PC-3 (cell line): ENCODE measurements at regions of chr13 and their contacts with region 1.

Region 1: GRCh38 chr13:60654415-60654814 is 257.4 kb downstream of the TDRD3 start:
- DNase-seq: peak; percentile 60
- ATAC-seq: peak; percentile 92
- H3K4me3 ChIP-seq: no peak overlapping the region
- H3K27ac ChIP-seq: no peak overlapping the region
- H3K4me1 ChIP-seq: no peaks in the 10 kb centered on the region; the same call in 1 of the 2 replicates
- H3K27me3 ChIP-seq: no peaks in the 10 kb centered on the region
- CTCF ChIP-seq: peak; percentile 79

Region 2: DNA sequence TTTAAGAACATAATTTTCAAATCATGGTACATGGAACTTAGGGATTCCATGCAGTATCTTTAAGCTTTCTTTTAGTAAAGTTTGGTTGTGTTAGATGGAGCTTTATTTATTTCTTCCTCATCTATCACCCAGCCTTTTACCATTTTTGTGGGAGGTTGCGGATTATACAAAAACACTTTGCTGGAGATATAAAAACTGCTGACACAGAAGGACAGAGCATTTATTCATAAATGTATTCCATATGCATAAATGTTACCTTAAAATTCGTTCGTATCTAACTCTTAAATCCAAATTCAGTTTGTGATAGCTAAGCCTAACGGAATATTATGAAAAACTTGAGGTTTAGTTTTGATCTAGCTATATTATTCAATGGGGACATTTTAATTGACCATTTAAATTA is 114.1 kb before region 1 on chr13:
- CTCF ChIA-PET with region 1: no interaction called
- POLR2A ChIA-PET with region 1: no interaction called
- intact Hi-C with region 1: no loop called
- DNase-seq: no peak
- ATAC-seq: no peak
- H3K4me3 ChIP-seq: no peak overlapping the region
- H3K27ac ChIP-seq: no peak overlapping the region
- H3K4me1 ChIP-seq: 0 out of 2 replicates have a peak, but pooled peaks cover 7% of the 10 kb centered on the region
- H3K27me3 ChIP-seq: no peaks in the 10 kb centered on the region
- CTCF ChIP-seq: no peak

Region 3: DNA sequence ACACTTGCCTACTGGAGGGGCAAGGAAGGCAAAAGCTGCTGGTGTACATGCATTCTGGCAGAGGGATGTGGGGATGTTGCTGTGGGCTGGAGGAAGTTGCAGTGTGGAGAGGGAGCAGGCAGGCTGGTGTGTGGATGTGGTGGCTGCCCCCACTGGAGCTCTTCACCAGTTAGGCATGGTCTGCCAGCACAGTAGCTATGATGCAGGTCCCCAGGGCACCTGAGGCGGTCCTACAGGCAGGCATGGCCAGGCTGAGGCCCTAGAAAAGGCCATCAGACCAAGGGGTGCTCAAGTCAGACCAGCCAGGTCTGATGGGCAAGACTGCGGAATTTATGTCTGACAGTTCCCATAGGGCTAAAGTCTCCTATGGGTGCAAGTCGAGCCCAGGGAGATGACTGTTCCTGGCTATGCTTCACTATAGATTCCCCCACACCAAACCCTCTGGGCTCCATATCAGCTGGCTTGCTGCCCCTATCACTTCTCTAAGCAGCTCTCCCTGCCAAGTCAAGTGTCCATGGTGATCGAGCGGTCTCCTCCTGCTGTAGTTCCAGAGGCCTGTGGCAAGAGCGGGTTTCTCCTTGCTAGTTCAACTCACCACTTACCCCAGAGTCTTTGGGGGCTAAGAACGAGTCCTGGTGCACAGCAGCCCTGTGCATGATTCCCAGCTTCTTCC is 215.7 kb after region 1 on chr13:
- CTCF ChIA-PET with region 1: no interaction called
- POLR2A ChIA-PET with region 1: no interaction called
- intact Hi-C with region 1: loop called (anchors 1 kb)
- DNase-seq: no peak
- ATAC-seq: no peak
- H3K4me3 ChIP-seq: no peak overlapping the region
- H3K27ac ChIP-seq: no peak overlapping the region
- H3K4me1 ChIP-seq: peaks cover 16% of the 10 kb centered on the region
- H3K27me3 ChIP-seq: no peaks in the 10 kb centered on the region
- CTCF ChIP-seq: no peak

Region 4: GRCh38 chr13:60893801-60894200 is 239.4 kb after region 1 on chr13:
- CTCF ChIA-PET with region 1: interaction called, 3 read pairs
- POLR2A ChIA-PET with region 1: no interaction called
- intact Hi-C with region 1: loop called (anchors 5 kb)
- DNase-seq: no peak
- ATAC-seq: no peak
- H3K4me3 ChIP-seq: no peak overlapping the region
- H3K27ac ChIP-seq: no peak overlapping the region
- H3K4me1 ChIP-seq: no peaks in the 10 kb centered on the region
- H3K27me3 ChIP-seq: no peaks in the 10 kb centered on the region
- CTCF ChIP-seq: no peak

Region 5: GRCh38 chr13:61261746-61262472 is 607.5 kb after region 1 on chr13:
- CTCF ChIA-PET with region 1: no interaction called
- POLR2A ChIA-PET with region 1: no interaction called
- intact Hi-C with region 1: loop called (anchors 5 kb)
- DNase-seq: no peak
- ATAC-seq: no peak
- H3K4me3 ChIP-seq: no peak overlapping the region
- H3K27ac ChIP-seq: no peak overlapping the region
- H3K4me1 ChIP-seq: no peaks in the 10 kb centered on the region
- H3K27me3 ChIP-seq: no peaks in the 10 kb centered on the region
- CTCF ChIP-seq: no peak

Region 6: DNA sequence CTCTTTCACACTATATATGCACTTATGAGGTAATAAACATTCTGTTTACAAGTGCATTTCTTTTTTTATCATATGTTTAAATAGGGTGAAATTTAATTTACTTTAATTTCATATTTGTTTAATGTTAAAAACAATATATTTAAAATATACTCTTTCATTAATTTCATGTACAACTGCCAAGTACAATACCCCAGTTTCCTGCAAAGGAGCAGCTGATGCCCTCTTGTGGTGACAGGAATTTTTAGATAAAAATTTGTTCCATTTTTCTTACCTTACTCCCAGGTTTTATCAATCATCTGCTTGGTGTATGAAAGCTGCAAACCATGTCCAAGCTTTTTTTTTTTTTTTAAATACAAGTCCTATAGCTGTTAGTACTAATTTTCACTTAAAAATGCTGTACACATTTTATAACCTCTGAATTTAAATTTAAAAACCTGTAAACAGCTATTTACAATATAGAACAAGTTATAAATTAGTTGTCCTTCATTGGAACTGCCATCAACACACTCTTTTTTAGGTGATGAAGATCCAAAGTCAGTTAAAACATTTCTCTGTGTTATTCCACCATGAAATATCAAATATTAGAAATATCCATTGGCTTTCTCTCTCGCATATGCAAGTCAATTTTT is 756.4 kb after region 1 on chr13:
- CTCF ChIA-PET with region 1: no interaction called
- POLR2A ChIA-PET with region 1: no interaction called
- intact Hi-C with region 1: loop called (anchors 1 kb)
- DNase-seq: peak; percentile 48
- ATAC-seq: no peak
- H3K4me3 ChIP-seq: no peak overlapping the region
- H3K27ac ChIP-seq: no peak overlapping the region
- H3K4me1 ChIP-seq: no peaks in the 10 kb centered on the region
- H3K27me3 ChIP-seq: no peaks in the 10 kb centered on the region
- CTCF ChIP-seq: peak; percentile 49; the same call in 1 of the 2 replicates